ENCODE measurements at regions of chr15 and their contacts with region 1.

Region 1: GRCh38 chr15:68875377-68876116 is 54.8 kb upstream of the SPESP1 start:
- DNase-seq: peak; percentile 87 to 96 (median 89)
- ATAC-seq: peak; percentile 80 to 96 (median 93)
- H3K4me3 ChIP-seq: peak overlapping the region in 10 of 12 donors; percentile 32 to 53 (median 44)
- H3K27ac ChIP-seq: no peak overlapping the region
- H3K4me1 ChIP-seq: peaks cover 0 to 8% (median 0%) of the 10 kb centered on the region in 12 donors
- H3K27me3 ChIP-seq: peaks cover 0 to 4% (median 0%) of the 10 kb centered on the region in 9 donors
- CTCF ChIP-seq: peak; percentile 77 to 91 (median 86)
- POLR2A ChIP-seq: no peak

Region 2: GRCh38 chr15:68550481-68551295 is 324.9 kb before region 1 on chr15:
- intact Hi-C with region 1: loop called in 9 of 10 experiments (anchors 1 to 2 kb)
- DNase-seq: peak; percentile 60 to 83 (median 72)
- ATAC-seq: peak in 3 of 4 donors; percentile 38 to 58 (median 43)
- H3K4me3 ChIP-seq: no peak overlapping the region
- H3K27ac ChIP-seq: no peak overlapping the region
- H3K4me1 ChIP-seq: peaks cover 0 to 8% (median 0%) of the 10 kb centered on the region in 12 donors
- H3K27me3 ChIP-seq: no peaks in the 10 kb centered on the region
- CTCF ChIP-seq: peak; percentile 89 to 97 (median 93)
- POLR2A ChIP-seq: no peak

Region 3: DNA sequence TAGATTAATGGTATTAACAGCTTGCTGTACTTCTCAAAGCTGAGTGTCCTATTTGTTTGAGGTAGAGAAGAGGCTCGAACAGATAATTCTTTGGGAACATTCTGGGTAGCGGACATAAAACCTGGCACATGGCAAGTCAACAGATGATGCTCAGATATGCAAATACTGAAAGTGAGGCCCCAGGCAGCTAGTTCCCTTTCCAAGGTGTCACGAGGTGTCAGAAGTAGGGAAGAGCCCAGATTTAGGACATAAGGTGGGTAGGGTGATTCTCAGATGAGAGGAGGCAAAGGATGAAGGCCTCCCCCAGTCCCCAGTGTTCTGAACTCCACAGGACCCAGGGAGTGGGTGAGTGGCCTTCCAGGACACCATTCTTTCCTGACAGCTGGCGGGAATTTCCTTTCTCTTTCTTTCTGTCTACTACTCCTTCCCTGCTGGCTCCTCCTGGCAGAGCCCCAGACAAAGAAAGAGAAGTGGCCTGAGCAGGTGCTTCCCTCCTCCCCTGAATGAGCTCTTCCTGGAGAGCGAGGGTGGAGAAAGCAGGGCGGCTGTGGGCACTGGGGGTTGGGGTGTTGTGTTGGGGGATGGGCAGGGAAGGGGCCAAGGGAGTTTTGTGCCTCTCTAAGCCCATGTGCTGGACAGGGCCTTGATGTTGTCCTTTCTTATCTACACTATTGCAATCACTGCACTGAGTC is 209.3 kb before region 1 on chr15:
- intact Hi-C with region 1: loop called in 8 of 10 experiments (anchors 2 to 10 kb)
- DNase-seq: no peak
- ATAC-seq: peak in 1 of 4 donors; percentile 28
- H3K4me3 ChIP-seq: no peak overlapping the region
- H3K27ac ChIP-seq: no peak overlapping the region
- H3K4me1 ChIP-seq: peaks cover 0 to 10% (median 0%) of the 10 kb centered on the region in 12 donors
- H3K27me3 ChIP-seq: no peaks in the 10 kb centered on the region
- CTCF ChIP-seq: no peak
- POLR2A ChIP-seq: no peak

Region 4: GRCh38 chr15:68730471-68730919 is 145.1 kb before region 1 on chr15:
- intact Hi-C with region 1: loop called (anchors 1 to 5 kb)
- DNase-seq: peak in 4 of 5 donors; percentile 43 to 62 (median 58)
- ATAC-seq: peak; percentile 32 to 59 (median 46)
- H3K4me3 ChIP-seq: peak overlapping the region in 1 of 12 donors; percentile 3
- H3K27ac ChIP-seq: peak overlapping the region; percentile 19 to 86 (median 72)
- H3K4me1 ChIP-seq: peaks cover 3 to 79% (median 49%) of the 10 kb centered on the region in 12 donors
- H3K27me3 ChIP-seq: no peaks in the 10 kb centered on the region
- CTCF ChIP-seq: peak; percentile 13 to 76 (median 58)
- POLR2A ChIP-seq: no peak

Region 5: GRCh38 chr15:68820295-68821189 is 55.0 kb before region 1 on chr15 and contains the start of gene ANP32A:
- intact Hi-C with region 1: loop called in 1 of 10 experiments (anchors 10 kb)
- DNase-seq: peak; percentile 97 to 99 (median 99)
- ATAC-seq: peak; percentile 81 to 92 (median 88)
- H3K4me3 ChIP-seq: peak within 1 kb of the TSS; percentile 80 to 98 (median 94)
- H3K27ac ChIP-seq: peak within 1 kb of the TSS; percentile 97 to 100 (median 100)
- H3K4me1 ChIP-seq: peaks cover 0 to 30% (median 19%) of the 10 kb centered on the region in 12 donors
- H3K27me3 ChIP-seq: no peaks in the 10 kb centered on the region
- CTCF ChIP-seq: no peak
- POLR2A ChIP-seq: peak in 1 of 2 donors; percentile 88
- total RNA-seq, gene ANP32A: 55.7 to 202 (median 142) TPM

Region 6: DNA sequence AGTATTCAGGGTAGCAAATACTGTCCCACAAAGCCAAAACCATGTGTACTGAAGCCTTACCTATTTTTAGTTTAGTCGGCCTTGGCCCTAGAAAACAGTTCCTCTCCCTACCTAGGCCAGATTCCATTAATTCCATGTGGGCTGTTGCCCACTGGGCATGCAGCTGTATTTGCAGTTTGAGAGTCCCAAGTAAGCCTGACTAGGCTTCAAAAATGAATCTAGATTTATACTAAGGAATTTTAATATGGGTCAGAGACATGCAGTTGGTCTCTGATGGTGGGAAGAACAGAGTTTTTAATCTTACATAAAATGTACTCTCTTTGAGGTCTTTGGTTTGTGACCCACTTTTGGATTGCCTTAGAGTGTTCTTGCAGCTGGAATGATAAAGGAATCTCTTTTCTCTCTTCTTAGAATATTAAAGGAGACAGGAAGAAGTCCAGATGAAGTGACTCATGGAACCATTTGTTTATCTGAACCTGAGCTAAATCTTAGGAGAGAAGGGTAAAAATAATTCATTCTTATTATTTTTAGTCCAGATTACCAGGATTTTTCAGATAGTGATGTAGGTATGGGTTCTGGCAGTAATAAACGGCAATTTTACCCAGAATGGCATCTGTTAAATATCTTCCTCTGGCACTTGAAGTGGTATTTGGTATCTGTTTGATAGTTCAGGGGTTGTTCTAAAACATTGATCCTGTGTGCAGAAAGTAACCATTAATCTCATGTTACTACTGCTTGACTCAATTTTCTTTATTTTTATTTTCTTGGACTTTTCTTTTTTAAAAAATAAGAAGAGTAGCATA is 318.7 kb after region 1 on chr15:
- intact Hi-C with region 1: no loop called
- DNase-seq: no peak
- ATAC-seq: peak in 2 of 4 donors; percentile 36 to 68
- H3K4me3 ChIP-seq: no peak overlapping the region
- H3K27ac ChIP-seq: peak overlapping the region in 11 of 12 donors; percentile 19 to 58 (median 43)
- H3K4me1 ChIP-seq: peaks cover 7 to 44% (median 23%) of the 10 kb centered on the region in 12 donors
- H3K27me3 ChIP-seq: no peaks in the 10 kb centered on the region
- CTCF ChIP-seq: no peak
- POLR2A ChIP-seq: no peak